Sigmoid colon (tissue), 7 donors: ENCODE measurements at regions of chrX and their contacts with region 1.

Region 1: DNA sequence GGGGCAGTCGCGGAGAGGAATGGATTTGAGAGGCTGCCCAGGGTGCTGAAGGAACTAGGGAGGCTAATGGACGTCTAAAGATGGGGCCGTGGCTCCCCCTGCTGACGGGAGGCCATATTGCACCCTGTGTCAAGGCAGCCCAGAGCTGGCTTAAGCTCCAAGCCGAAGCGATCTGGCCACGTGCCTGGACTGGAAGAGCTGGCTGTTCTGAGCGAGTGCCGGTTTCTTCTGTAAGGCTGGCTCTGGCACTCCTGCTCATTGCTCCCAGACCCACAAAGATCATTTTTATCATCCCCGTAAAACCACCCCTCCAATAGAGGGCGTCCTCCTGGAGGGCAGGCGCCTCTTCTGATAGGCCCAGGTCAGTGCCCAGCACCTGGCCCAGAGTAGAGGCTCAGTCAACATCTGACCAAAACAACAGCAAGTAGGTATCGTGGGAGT is 5.6 kb downstream of the PNCK start:
- DNase-seq: peak; percentile 94
- H3K4me3 ChIP-seq: no peak overlapping the region
- H3K27ac ChIP-seq: peak overlapping the region; percentile 27 to 79 (median 72)
- H3K4me1 ChIP-seq: peaks cover 0 to 3% (median 0%) of the 10 kb centered on the region in 4 donors
- H3K27me3 ChIP-seq: peaks cover 0 to 7% (median 0%) of the 10 kb centered on the region in 3 donors
- CTCF ChIP-seq: peak; percentile 28 to 74 (median 68)
- EP300 ChIP-seq: no peak
- POLR2A ChIP-seq: no peak

Region 2: DNA sequence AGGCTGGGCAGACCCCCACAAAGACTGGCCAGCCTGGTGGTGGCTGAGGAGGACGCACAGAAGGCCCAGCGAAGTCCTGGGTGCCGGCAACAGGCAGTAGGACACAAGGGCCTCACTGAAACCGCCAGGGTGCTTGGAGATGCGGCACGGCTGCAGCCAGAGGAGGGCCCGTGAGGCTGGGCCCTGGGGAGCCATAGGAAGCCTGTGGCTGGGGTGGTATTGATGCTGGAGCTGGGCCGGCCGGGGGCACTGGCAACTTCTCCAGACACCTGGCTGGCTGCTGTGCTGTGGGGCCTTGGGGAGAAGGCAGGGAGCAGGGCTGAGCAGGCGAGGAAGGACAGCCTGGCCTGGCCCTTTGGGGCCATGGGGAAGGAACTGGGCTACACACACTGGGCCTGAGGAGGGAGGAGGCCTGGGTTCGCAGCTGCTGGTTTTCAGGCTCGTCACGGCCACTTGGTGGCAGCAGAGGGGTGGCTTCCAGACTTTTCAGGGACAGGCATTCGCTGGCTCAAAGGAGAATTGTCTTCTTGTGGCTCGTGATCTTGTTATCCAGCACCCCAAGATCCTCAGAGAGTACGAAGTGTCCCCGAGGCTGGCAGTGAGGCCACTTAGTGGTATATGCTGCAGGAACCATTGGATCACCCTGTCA is 113.3 kb before region 1 on chrX:
- intact Hi-C with region 1: loop called (anchors 2 kb)
- DNase-seq: peak; percentile 82
- H3K4me3 ChIP-seq: no peak overlapping the region
- H3K27ac ChIP-seq: no peak overlapping the region
- H3K4me1 ChIP-seq: no peaks in the 10 kb centered on the region
- H3K27me3 ChIP-seq: no peaks in the 10 kb centered on the region
- CTCF ChIP-seq: peak; percentile 27 to 58 (median 44)
- EP300 ChIP-seq: no peak
- POLR2A ChIP-seq: no peak

Region 3: GRCh38 chrX:153609917-153610428 is 58.0 kb before region 1 on chrX:
- intact Hi-C with region 1: loop called (anchors 1 kb)
- DNase-seq: peak; percentile 84
- H3K4me3 ChIP-seq: peak overlapping the region; percentile 23 to 53 (median 45)
- H3K27ac ChIP-seq: peak overlapping the region in 2 of 4 donors; percentile 19 to 41
- H3K4me1 ChIP-seq: peaks cover 0 to 13% (median 2%) of the 10 kb centered on the region in 4 donors
- H3K27me3 ChIP-seq: peaks cover 0 to 3% (median 0%) of the 10 kb centered on the region in 3 donors
- CTCF ChIP-seq: peak; percentile 42 to 71 (median 56)
- EP300 ChIP-seq: no peak
- POLR2A ChIP-seq: no peak